ENCODE measurements at regions of chr9 and their contacts with region 1.

Region 1: GRCh38 chr9:117487555-117488175 is 72.8 kb upstream of the ASTN2 start:
- DNase-seq: peak; percentile 7
- ATAC-seq: peak; percentile 100
- H3K4me3 ChIP-seq: no peak overlapping the region
- H3K27ac ChIP-seq: no peak overlapping the region
- H3K4me1 ChIP-seq: no peaks in the 10 kb centered on the region
- H3K27me3 ChIP-seq: no peaks in the 10 kb centered on the region
- CTCF ChIP-seq: peak; percentile 90 to 98 (median 94); a peak in 5 of 6 replicates
- EP300 ChIP-seq: no peak
- POLR2A ChIP-seq: no peak
- RAD21 ChIP-seq: peak; percentile 79

Region 2: DNA sequence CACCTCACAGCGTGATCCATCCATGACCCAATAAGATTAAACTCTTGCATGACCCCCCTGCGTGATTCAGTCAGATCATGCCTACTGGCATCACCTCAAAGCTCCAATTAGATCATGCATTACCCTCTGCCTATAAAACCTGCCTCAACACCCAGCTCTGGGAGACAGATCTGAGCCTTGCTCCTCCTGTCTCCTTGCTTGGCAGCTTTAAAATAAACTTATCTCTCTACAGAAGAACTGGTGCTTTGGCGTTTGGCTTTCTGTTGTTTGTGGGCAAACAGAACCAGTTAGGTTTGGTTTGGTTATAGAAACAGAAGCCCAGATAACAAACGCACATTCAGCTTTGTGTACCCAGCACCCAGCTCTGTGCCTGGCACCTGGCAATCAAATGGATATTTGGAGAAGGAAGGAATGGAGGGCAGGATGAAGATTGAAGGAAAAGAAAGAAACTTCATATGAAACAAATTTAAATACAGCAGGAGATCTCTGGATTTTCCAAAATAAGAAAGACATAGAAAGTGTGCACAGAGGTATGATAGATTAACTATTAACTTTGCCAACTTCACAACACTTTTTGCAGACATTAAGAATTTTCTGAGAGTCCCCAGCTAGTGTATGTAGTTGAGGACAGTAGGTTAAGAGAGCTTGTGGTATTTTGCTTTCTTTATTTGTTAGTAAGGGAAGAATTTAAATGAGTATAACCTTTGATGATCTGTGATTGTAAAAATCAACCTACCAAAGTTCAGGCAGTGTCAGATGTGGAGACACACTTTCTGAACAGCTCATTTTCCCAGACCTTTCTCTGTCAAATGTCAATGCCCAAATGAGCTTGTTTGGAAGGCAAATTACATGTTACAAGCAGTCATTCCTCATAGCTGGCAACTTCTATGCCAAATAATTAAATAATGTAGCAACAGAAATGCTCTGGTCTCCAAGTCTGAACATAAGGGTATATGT is 29.3 kb after region 1 on chr9:
- CTCF ChIA-PET with region 1: interaction called, 11 read pairs
- POLR2A ChIA-PET with region 1: no interaction called
- RAD21 ChIA-PET with region 1: no interaction called
- SMC1A ChIA-PET with region 1: no interaction called
- in situ Hi-C with region 1: no loop called
- intact Hi-C with region 1: no loop called
- DNase-seq: no peak
- ATAC-seq: no peak
- H3K4me3 ChIP-seq: no peak overlapping the region
- H3K27ac ChIP-seq: no peak overlapping the region
- H3K4me1 ChIP-seq: no peaks in the 10 kb centered on the region
- H3K27me3 ChIP-seq: no peaks in the 10 kb centered on the region
- CTCF ChIP-seq: no peak
- EP300 ChIP-seq: no peak
- POLR2A ChIP-seq: no peak
- RAD21 ChIP-seq: no peak

Region 3: GRCh38 chr9:117555964-117556629 is 68.4 kb after region 1 on chr9:
- CTCF ChIA-PET with region 1: interaction called, 29 read pairs
- POLR2A ChIA-PET with region 1: no interaction called
- RAD21 ChIA-PET with region 1: interaction called, 4 read pairs
- SMC1A ChIA-PET with region 1: interaction called, 22 read pairs
- in situ Hi-C with region 1: no loop called
- intact Hi-C with region 1: loop called (anchors 1 kb)
- DNase-seq: peak; percentile 7
- ATAC-seq: peak; percentile 94
- H3K4me3 ChIP-seq: no peak overlapping the region
- H3K27ac ChIP-seq: no peak overlapping the region
- H3K4me1 ChIP-seq: no peaks in the 10 kb centered on the region
- H3K27me3 ChIP-seq: no peaks in the 10 kb centered on the region
- CTCF ChIP-seq: peak; percentile 58 to 81 (median 71)
- EP300 ChIP-seq: no peak
- POLR2A ChIP-seq: no peak
- RAD21 ChIP-seq: peak; percentile 61